ENCODE measurements at regions of chr17 and their contacts with region 1.

Region 1: DNA sequence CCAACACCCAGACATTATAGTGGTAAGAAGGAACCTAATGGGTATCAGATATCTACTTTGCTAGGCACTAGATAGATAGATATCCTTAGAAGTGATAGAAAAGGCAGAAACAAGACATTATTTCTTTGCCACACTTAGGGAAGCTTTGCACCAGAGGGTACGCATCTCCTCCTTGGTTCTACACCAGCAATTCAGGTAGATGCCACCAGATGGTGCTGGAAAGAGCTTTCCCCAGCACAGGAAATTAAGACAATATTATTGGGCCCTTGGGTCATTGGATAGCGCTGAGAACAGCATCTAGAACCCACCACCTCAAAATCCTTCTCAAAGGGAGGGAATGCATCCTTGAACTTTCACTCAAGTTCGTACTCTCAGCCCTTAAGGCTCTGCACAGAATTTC is 173.8 kb upstream of the CCL2 start:
- DNase-seq: peak in 1 of 2 experiments; percentile 57
- H3K4me3 ChIP-seq: no peak overlapping the region
- H3K27ac ChIP-seq: no peak overlapping the region
- H3K4me1 ChIP-seq: peaks cover 0 to 9% (median 2%) of the 10 kb centered on the region in 4 experiments; a peak in 4 of 7 replicates
- H3K27me3 ChIP-seq: no peaks in the 10 kb centered on the region
- CTCF ChIP-seq: peak; percentile 32 to 82 (median 81)
- EP300 ChIP-seq: no peak
- POLR2A ChIP-seq: no peak
- RAD21 ChIP-seq: peak; percentile 72 to 79

Region 2: GRCh38 chr17:33875973-33876372 is 205.3 kb before region 1 on chr17:
- CTCF ChIA-PET with region 1: no interaction called
- POLR2A ChIA-PET with region 1: no interaction called
- DNase-seq: no peak
- H3K4me3 ChIP-seq: no peak overlapping the region
- H3K27ac ChIP-seq: no peak overlapping the region
- H3K4me1 ChIP-seq: no peaks in the 10 kb centered on the region
- H3K27me3 ChIP-seq: no peaks in the 10 kb centered on the region
- CTCF ChIP-seq: no peak
- EP300 ChIP-seq: no peak
- POLR2A ChIP-seq: no peak
- RAD21 ChIP-seq: no peak

Region 3: GRCh38 chr17:34091975-34092374 is 10.7 kb after region 1 on chr17:
- CTCF ChIA-PET with region 1: interaction called, 32 read pairs
- POLR2A ChIA-PET with region 1: no interaction called
- DNase-seq: no peak
- H3K4me3 ChIP-seq: no peak overlapping the region
- H3K27ac ChIP-seq: no peak overlapping the region
- H3K4me1 ChIP-seq: no peaks in the 10 kb centered on the region
- H3K27me3 ChIP-seq: no peaks in the 10 kb centered on the region
- CTCF ChIP-seq: no peak
- EP300 ChIP-seq: no peak
- POLR2A ChIP-seq: no peak
- RAD21 ChIP-seq: no peak